ENCODE measurements at regions of chr15 and their contacts with region 1.

Region 1: GRCh38 chr15:33700695-33701304 is 267.5 kb upstream of the CHRM5 start:
- DNase-seq: peak; percentile 29 to 73 (median 47)
- ATAC-seq: peak; percentile 68
- H3K4me3 ChIP-seq: no peak overlapping the region
- H3K4me3 Mint-ChIP-seq: no peak overlapping the region
- H3K27ac ChIP-seq: no peak overlapping the region
- H3K27ac Mint-ChIP-seq: no peak overlapping the region
- H3K4me1 ChIP-seq: no peaks in the 10 kb centered on the region
- H3K4me1 Mint-ChIP-seq: no peaks in the 10 kb centered on the region
- H3K27me3 ChIP-seq: peaks cover 2 to 6% of the 10 kb centered on the region in 2 experiments
- H3K27me3 Mint-ChIP-seq: peaks cover 9% of the 10 kb centered on the region
- CTCF ChIP-seq: peak; percentile 94

Region 2: DNA sequence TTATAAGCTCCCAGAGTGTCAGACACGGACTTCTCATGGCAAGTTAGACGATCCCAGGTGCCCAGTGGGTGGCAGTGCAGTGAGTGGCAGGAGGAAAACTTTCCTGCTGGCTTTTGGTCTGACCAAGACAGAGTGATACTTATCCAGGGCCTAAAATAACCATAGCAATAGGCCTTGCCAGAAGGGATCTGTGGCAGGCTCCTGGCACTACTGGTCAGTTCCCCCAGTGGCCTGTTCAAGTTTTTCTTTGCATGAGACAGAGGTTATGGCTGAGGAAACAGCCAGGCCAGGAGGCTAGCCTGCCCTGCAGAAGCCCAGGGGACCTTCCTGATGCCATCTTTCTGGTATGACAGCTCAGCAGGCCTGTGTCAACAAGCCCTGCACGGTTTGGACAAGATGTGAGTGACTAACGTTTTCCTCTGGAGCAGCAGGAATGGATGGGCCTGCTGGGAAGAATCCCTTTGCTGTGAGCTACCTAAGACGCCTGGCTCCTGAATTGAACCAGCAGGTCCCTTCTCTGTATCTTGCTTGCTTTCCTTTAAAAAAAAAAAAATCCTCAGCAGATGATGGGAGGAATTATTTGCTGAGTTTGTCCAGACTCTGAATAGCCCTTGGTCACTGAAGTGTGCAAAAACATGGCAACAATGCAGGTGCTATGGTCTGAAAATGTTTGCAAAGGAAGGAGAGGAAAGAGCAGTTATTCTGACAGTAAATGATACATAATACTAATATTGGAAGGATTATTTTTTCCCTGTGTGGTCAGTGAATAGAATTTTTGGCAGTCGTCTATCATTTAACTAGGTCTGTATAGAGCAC is 1041.3 kb before region 1 on chr15:
- CTCF ChIA-PET with region 1: interaction called, 3 read pairs
- POLR2A ChIA-PET with region 1: no interaction called
- intact Hi-C with region 1: loop called in 1 of 2 experiments (anchors 10 kb)
- DNase-seq: no peak
- ATAC-seq: no peak
- H3K4me3 ChIP-seq: no peak overlapping the region
- H3K4me3 Mint-ChIP-seq: no peak overlapping the region
- H3K27ac ChIP-seq: no peak overlapping the region
- H3K27ac Mint-ChIP-seq: no peak overlapping the region
- H3K4me1 ChIP-seq: peaks cover 5% of the 10 kb centered on the region
- H3K4me1 Mint-ChIP-seq: peaks cover 10% of the 10 kb centered on the region
- H3K27me3 ChIP-seq: no peaks in the 10 kb centered on the region
- H3K27me3 Mint-ChIP-seq: no peaks in the 10 kb centered on the region
- CTCF ChIP-seq: no peak

Region 3: DNA sequence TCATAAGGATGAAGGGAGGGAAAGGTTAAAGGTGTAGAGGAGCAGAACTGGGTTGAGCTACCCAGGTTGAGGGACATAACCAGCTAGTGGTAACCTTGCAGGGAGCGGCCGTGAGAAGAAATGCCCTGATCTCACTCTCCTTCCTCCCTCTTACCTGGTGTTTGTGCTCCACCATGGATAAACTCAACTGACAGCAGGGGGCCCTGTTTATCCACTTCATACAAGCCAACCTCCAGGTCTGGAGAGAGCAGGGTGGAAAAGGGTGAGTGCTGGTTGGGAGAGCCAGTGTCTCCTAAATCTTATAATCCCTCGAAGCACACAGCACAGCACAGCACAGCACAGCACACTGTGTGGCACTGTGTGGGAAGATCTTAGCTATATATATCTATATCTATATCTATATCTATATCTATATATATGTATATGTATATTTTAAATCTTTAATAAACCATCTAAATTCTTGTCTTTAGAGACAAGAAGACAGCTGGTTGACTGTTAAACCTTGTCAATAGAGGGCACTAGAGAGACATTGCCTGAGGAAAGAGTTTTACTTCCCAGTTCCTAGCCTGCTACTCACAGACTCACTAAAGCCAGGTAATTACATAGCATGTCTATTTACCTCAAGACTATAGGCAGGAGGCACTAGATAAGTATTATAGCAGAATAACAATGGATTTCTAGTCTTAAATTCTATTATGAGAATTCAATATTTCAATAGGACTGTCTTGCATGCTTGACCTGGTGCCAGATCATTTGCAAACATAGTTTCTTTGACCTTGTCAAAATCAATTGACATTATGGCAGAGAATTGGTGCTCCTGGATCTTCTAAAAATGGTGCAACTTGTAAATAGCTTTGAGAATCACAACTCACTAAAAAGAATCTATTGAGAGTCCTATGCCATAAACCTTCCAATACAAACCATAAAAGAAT is 484.6 kb before region 1 on chr15:
- CTCF ChIA-PET with region 1: no interaction called
- POLR2A ChIA-PET with region 1: no interaction called
- intact Hi-C with region 1: loop called in 1 of 2 experiments (anchors 5 kb)
- DNase-seq: peak in 3 of 14 experiments; percentile 31 to 49 (median 39)
- ATAC-seq: peak; percentile 43
- H3K4me3 ChIP-seq: no peak overlapping the region
- H3K4me3 Mint-ChIP-seq: no peak overlapping the region
- H3K27ac ChIP-seq: no peak overlapping the region
- H3K27ac Mint-ChIP-seq: no peak overlapping the region
- H3K4me1 ChIP-seq: no peaks in the 10 kb centered on the region
- H3K4me1 Mint-ChIP-seq: no peaks in the 10 kb centered on the region
- H3K27me3 ChIP-seq: no peaks in the 10 kb centered on the region
- H3K27me3 Mint-ChIP-seq: no peaks in the 10 kb centered on the region
- CTCF ChIP-seq: peak; percentile 72

Region 4: DNA sequence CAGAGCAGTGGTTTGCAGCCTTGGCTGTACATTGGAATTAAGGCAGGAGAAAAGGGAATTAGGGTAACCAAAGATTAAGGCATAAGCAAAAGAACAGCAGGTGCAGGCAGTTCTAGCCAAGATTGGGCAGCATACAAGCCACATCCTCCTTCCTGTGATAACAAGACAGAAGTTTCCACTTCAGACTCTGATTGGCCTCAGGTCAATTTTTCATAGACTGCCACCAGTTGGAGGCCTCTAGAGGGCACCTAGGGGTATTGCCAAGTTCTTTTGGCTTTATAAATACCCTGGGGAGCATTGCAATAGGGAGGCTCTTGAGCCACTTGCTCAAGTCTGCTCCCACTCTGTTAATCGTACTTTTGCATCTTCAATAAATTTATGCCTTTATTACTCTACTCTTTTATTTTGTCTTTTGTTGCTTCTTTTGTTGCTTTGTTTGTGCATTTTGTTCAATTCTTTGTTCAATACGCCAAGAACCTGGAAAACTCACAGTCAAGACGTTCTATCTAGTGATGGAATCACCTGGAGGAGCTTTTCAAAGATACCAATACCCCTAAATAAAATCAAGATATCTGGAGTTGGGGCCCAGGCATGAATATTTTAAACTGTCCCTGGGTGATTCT is 474.1 kb before region 1 on chr15:
- CTCF ChIA-PET with region 1: no interaction called
- POLR2A ChIA-PET with region 1: no interaction called
- intact Hi-C with region 1: loop called in 1 of 2 experiments (anchors 5 kb)
- DNase-seq: peak; percentile 24 to 86 (median 57)
- ATAC-seq: peak; percentile 99
- H3K4me3 ChIP-seq: no peak overlapping the region
- H3K4me3 Mint-ChIP-seq: peak overlapping the region; percentile 26
- H3K27ac ChIP-seq: peak overlapping the region in 1 of 2 donors; percentile 32
- H3K27ac Mint-ChIP-seq: peak overlapping the region; percentile 77
- H3K4me1 ChIP-seq: peaks cover 13% of the 10 kb centered on the region
- H3K4me1 Mint-ChIP-seq: peaks cover 26% of the 10 kb centered on the region
- H3K27me3 ChIP-seq: no peaks in the 10 kb centered on the region
- H3K27me3 Mint-ChIP-seq: no peaks in the 10 kb centered on the region
- CTCF ChIP-seq: peak; percentile 71

Region 5: GRCh38 chr15:33234014-33234461 is 466.8 kb before region 1 on chr15:
- CTCF ChIA-PET with region 1: no interaction called
- POLR2A ChIA-PET with region 1: no interaction called
- intact Hi-C with region 1: loop called (anchors 1 to 5 kb)
- DNase-seq: peak in 3 of 14 experiments; percentile 11 to 17 (median 15)
- ATAC-seq: no peak
- H3K4me3 ChIP-seq: no peak overlapping the region
- H3K4me3 Mint-ChIP-seq: no peak overlapping the region
- H3K27ac ChIP-seq: no peak overlapping the region
- H3K27ac Mint-ChIP-seq: no peak overlapping the region
- H3K4me1 ChIP-seq: no peaks in the 10 kb centered on the region
- H3K4me1 Mint-ChIP-seq: no peaks in the 10 kb centered on the region
- H3K27me3 ChIP-seq: peaks cover 3 to 4% of the 10 kb centered on the region in 2 experiments
- H3K27me3 Mint-ChIP-seq: peaks cover 6% of the 10 kb centered on the region
- CTCF ChIP-seq: no peak

Region 6: DNA sequence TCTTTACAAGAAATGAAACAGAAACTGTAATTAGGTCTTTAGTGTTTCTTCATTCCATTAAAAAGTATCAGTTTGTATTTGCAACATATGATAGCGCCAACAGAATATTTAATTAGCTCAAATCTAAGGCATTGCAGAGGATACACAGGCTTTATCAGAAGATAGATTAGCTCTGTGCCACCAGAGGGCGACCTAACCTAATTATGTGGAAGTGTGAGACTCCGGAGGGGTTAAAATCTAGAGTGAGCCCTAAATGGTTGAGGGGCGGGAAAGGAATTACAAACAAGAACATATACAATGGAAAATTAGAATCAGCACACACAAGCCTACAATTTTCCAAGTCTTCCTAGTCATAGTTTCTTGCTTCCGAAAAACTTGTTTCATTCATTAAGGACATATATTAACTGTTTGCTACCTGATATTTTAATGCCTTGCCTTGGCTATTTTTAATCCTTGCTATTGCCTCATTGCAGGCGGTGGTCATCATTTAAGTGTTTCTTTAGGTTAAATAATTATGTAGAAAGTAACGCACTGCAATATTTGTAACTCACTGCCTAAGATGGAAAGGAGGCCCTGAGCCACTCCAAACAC is 408.0 kb before region 1 on chr15:
- CTCF ChIA-PET with region 1: no interaction called
- POLR2A ChIA-PET with region 1: no interaction called
- intact Hi-C with region 1: loop called in 1 of 2 experiments (anchors 5 kb)
- DNase-seq: peak in 12 of 14 experiments; percentile 1 to 61 (median 23)
- ATAC-seq: no peak
- H3K4me3 ChIP-seq: no peak overlapping the region
- H3K4me3 Mint-ChIP-seq: no peak overlapping the region
- H3K27ac ChIP-seq: no peak overlapping the region
- H3K27ac Mint-ChIP-seq: no peak overlapping the region
- H3K4me1 ChIP-seq: no peaks in the 10 kb centered on the region
- H3K4me1 Mint-ChIP-seq: no peaks in the 10 kb centered on the region
- H3K27me3 ChIP-seq: no peaks in the 10 kb centered on the region
- H3K27me3 Mint-ChIP-seq: no peaks in the 10 kb centered on the region
- CTCF ChIP-seq: peak; percentile 64